ENCODE measurements at regions of chr16 and their contacts with region 1.

Region 1: GRCh38 chr16:2874912-2875362 is 8.1 kb upstream of the FLYWCH2 start:
- DNase-seq: peak; percentile 93
- ATAC-seq: peak; percentile 99

Region 2: GRCh38 chr16:2739625-2740435 is 135.1 kb before region 1 on chr16:
- intact Hi-C with region 1: no loop called
- DNase-seq: no peak
- ATAC-seq: no peak

Region 3: DNA sequence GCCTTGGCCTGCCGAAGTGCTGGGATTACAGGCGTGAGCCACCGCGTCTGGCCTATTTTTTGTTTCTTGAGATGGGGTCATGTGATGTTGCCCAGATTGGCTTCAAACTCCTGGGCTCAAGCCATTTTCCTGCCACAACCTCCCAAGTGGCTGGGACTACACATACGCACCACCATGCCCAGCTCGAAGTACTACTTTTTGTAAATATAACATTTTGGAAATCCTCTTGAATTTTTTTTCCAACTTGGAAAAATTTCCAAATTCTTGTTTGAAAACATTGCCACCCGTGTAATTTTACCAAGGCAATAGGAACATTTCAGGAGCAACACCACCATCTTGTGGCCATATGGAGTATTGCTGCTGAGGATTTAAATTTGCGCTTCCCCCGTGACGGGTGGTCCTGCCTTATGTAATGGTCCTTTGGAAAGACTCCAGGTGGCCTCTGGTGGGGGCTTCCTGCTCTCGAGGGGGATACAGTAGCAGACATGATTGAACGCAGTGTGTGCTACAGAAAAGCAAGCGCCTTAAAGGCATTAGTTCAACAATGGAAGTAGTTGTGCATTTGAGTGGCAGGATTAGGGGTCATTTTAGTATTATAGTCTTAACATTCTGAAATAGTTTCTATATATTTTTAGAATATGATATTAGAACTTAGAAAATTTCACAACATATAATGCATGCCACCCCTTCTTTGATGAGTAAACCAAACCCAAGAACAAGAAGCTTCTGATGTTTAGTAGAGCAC is 44.7 kb after region 1 on chr16:
- intact Hi-C with region 1: loop called (anchors 2 kb)
- DNase-seq: no peak
- ATAC-seq: peak; percentile 67

Region 4: GRCh38 chr16:2955779-2956578 is 81.0 kb after region 1 on chr16:
- intact Hi-C with region 1: no loop called
- DNase-seq: no peak
- ATAC-seq: no peak